SK-N-SH (cell line): ENCODE measurements at regions of chrX and their contacts with region 1.

Region 1: GRCh38 chrX:3940000-3940610 is 226.7 kb upstream of the PRKX start:
- DNase-seq: peak; percentile 38
- H3K4me3 ChIP-seq: no peak overlapping the region
- H3K27ac ChIP-seq: no peak overlapping the region
- H3K4me1 ChIP-seq: no peaks in the 10 kb centered on the region
- H3K27me3 ChIP-seq: no peaks in the 10 kb centered on the region
- CTCF ChIP-seq: peak; percentile 71
- EP300 ChIP-seq: no peak
- RAD21 ChIP-seq: peak; percentile 72

Region 2: GRCh38 chrX:3428792-3429191 is 511.3 kb before region 1 on chrX:
- CTCF ChIA-PET with region 1: no interaction called
- POLR2A ChIA-PET with region 1: no interaction called
- DNase-seq: no peak
- H3K4me3 ChIP-seq: no peak overlapping the region
- H3K27ac ChIP-seq: no peak overlapping the region
- H3K4me1 ChIP-seq: no peaks in the 10 kb centered on the region
- H3K27me3 ChIP-seq: no peaks in the 10 kb centered on the region
- CTCF ChIP-seq: no peak
- EP300 ChIP-seq: no peak
- RAD21 ChIP-seq: no peak

Region 3: GRCh38 chrX:3950373-3950772 is 10.3 kb after region 1 on chrX:
- CTCF ChIA-PET with region 1: interaction called, 11 read pairs
- POLR2A ChIA-PET with region 1: no interaction called
- DNase-seq: no peak
- H3K4me3 ChIP-seq: no peak overlapping the region
- H3K27ac ChIP-seq: no peak overlapping the region
- H3K4me1 ChIP-seq: no peaks in the 10 kb centered on the region
- H3K27me3 ChIP-seq: no peaks in the 10 kb centered on the region
- CTCF ChIP-seq: no peak
- EP300 ChIP-seq: no peak
- RAD21 ChIP-seq: no peak